ENCODE measurements at regions of chr6 and their contacts with region 1.

Region 1: GRCh38 chr6:43250992-43251373 is 7.7 kb downstream of the TTBK1 start:
- DNase-seq: no peak
- H3K4me3 ChIP-seq: no peak overlapping the region
- H3K27ac ChIP-seq: no peak overlapping the region
- H3K4me1 ChIP-seq: peaks cover 12% of the 10 kb centered on the region
- H3K27me3 ChIP-seq: no peaks in the 10 kb centered on the region
- CTCF ChIP-seq: no peak
- POLR2A ChIP-seq: no peak

Region 2: GRCh38 chr6:43516697-43517504 is 265.9 kb after region 1 on chr6 and contains the starts of genes POLR1C and YIPF3:
- intact Hi-C with region 1: loop called (anchors 10 kb)
- DNase-seq: peak; percentile 99
- H3K4me3 ChIP-seq: peak within 1 kb of the TSS; percentile 81 to 92
- H3K27ac ChIP-seq: peak within 1 kb of the TSS; percentile 77 to 83
- H3K4me1 ChIP-seq: peaks cover 23% of the 10 kb centered on the region
- H3K27me3 ChIP-seq: no peaks in the 10 kb centered on the region
- CTCF ChIP-seq: no peak
- POLR2A ChIP-seq: no peak
- total RNA-seq, gene POLR1C: 35.0 to 37.7 TPM
- total RNA-seq, gene YIPF3: 130 to 138 TPM